ENCODE measurements at regions of chrX and their contacts with region 1.

Region 1: GRCh38 chrX:139932901-139933796 is at the start of gene ATP11C:
- DNase-seq: peak; percentile 46
- ATAC-seq: peak; percentile 82
- H3K4me3 ChIP-seq: peak within 1 kb of the TSS; percentile 79
- H3K27ac ChIP-seq: peak within 1 kb of the TSS; percentile 83
- H3K4me1 ChIP-seq: no peaks in the 10 kb centered on the region
- H3K27me3 ChIP-seq: no peaks in the 10 kb centered on the region
- CTCF ChIP-seq: peak in 2 of 3 experiments; percentile 11 to 50; a peak in 3 of 6 replicates
- EP300 ChIP-seq: no peak
- POLR2A ChIP-seq: peak; percentile 88
- RAD21 ChIP-seq: peak; percentile 69
- polyA plus RNA-seq, gene ATP11C: 16.2 to 19.1 TPM

Region 2: GRCh38 chrX:139554376-139554775 is 378.8 kb before region 1 on chrX:
- CTCF ChIA-PET with region 1: interaction called, 5 read pairs
- POLR2A ChIA-PET with region 1: no interaction called
- RAD21 ChIA-PET with region 1: no interaction called
- SMC1A ChIA-PET with region 1: no interaction called
- in situ Hi-C with region 1: loop called (anchors 10 kb)
- intact Hi-C with region 1: loop called (anchors 5 kb)
- DNase-seq: no peak
- ATAC-seq: peak; percentile 53
- H3K4me3 ChIP-seq: no peak overlapping the region
- H3K27ac ChIP-seq: peak overlapping the region; percentile 28; the same call in 1 of the 2 replicates
- H3K4me1 ChIP-seq: peaks cover 6% of the 10 kb centered on the region
- H3K27me3 ChIP-seq: no peaks in the 10 kb centered on the region; a peak in 1 of 4 replicates
- CTCF ChIP-seq: no peak
- EP300 ChIP-seq: no peak
- POLR2A ChIP-seq: no peak
- RAD21 ChIP-seq: no peak

Region 3: GRCh38 chrX:139725720-139726119 is 207.4 kb before region 1 on chrX:
- CTCF ChIA-PET with region 1: no interaction called
- POLR2A ChIA-PET with region 1: no interaction called
- RAD21 ChIA-PET with region 1: no interaction called
- SMC1A ChIA-PET with region 1: interaction called, 6 read pairs
- in situ Hi-C with region 1: no loop called
- intact Hi-C with region 1: loop called (anchors 5 kb)
- DNase-seq: peak; percentile 64
- ATAC-seq: peak; percentile 98
- H3K4me3 ChIP-seq: no peak overlapping the region
- H3K27ac ChIP-seq: no peak overlapping the region
- H3K4me1 ChIP-seq: no peaks in the 10 kb centered on the region
- H3K27me3 ChIP-seq: no peaks in the 10 kb centered on the region
- CTCF ChIP-seq: no peak
- EP300 ChIP-seq: no peak
- POLR2A ChIP-seq: no peak
- RAD21 ChIP-seq: no peak

Region 4: GRCh38 chrX:139826065-139827044 is 106.8 kb before region 1 on chrX:
- CTCF ChIA-PET with region 1: interaction called, 3 read pairs
- POLR2A ChIA-PET with region 1: no interaction called
- RAD21 ChIA-PET with region 1: interaction called, 4 read pairs
- SMC1A ChIA-PET with region 1: interaction called, 9 read pairs
- in situ Hi-C with region 1: no loop called
- intact Hi-C with region 1: loop called (anchors 5 kb)
- DNase-seq: no peak
- ATAC-seq: peak; percentile 19; the same call in 2 of the 3 replicates
- H3K4me3 ChIP-seq: no peak overlapping the region
- H3K27ac ChIP-seq: no peak overlapping the region
- H3K4me1 ChIP-seq: no peaks in the 10 kb centered on the region
- H3K27me3 ChIP-seq: no peaks in the 10 kb centered on the region
- CTCF ChIP-seq: no peak
- EP300 ChIP-seq: no peak
- POLR2A ChIP-seq: no peak
- RAD21 ChIP-seq: no peak

Region 5: GRCh38 chrX:139881572-139881971 is 51.6 kb before region 1 on chrX:
- CTCF ChIA-PET with region 1: no interaction called
- POLR2A ChIA-PET with region 1: no interaction called
- RAD21 ChIA-PET with region 1: no interaction called
- SMC1A ChIA-PET with region 1: no interaction called
- in situ Hi-C with region 1: no loop called
- intact Hi-C with region 1: no loop called
- DNase-seq: no peak
- ATAC-seq: no peak
- H3K4me3 ChIP-seq: no peak overlapping the region
- H3K27ac ChIP-seq: no peak overlapping the region
- H3K4me1 ChIP-seq: no peaks in the 10 kb centered on the region; the same call in 1 of the 2 replicates
- H3K27me3 ChIP-seq: no peaks in the 10 kb centered on the region
- CTCF ChIP-seq: no peak
- EP300 ChIP-seq: no peak
- POLR2A ChIP-seq: no peak
- RAD21 ChIP-seq: no peak

Region 6: GRCh38 chrX:139909712-139910111 is 23.4 kb before region 1 on chrX:
- CTCF ChIA-PET with region 1: interaction called, 4 read pairs
- POLR2A ChIA-PET with region 1: interaction called, 5 read pairs
- RAD21 ChIA-PET with region 1: interaction called, 3 read pairs
- SMC1A ChIA-PET with region 1: interaction called, 10 read pairs
- in situ Hi-C with region 1: no loop called
- intact Hi-C with region 1: no loop called
- DNase-seq: no peak
- ATAC-seq: peak; percentile 76
- H3K4me3 ChIP-seq: no peak overlapping the region
- H3K27ac ChIP-seq: peak overlapping the region; percentile 39; the same call in 1 of the 2 replicates
- H3K4me1 ChIP-seq: no peaks in the 10 kb centered on the region; the same call in none of the 2 replicates
- H3K27me3 ChIP-seq: no peaks in the 10 kb centered on the region
- CTCF ChIP-seq: no peak
- EP300 ChIP-seq: no peak
- POLR2A ChIP-seq: no peak
- RAD21 ChIP-seq: no peak